ENCODE measurements at regions of chr12 and their contacts with region 1.

Region 1: DNA sequence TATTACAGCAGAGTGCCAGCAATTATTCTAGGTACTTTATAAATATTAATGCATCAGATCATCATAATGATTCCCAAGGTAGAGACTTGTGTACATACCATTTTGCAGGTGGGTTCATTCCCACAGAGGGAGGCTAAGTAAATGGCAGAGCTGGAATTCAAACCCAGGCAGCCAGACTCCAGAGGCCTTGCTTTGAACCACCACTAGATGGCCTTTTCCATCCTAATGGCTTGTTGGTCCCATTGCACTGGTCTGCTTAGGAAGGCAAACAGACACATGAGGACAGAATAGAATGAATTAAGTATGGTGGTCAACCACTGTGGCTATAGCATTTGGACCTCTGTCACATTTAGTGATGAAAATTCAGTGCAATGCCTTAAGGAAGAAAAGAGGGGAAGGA is 158.7 kb downstream of the METTL25 start:
- DNase-seq: no peak
- ATAC-seq: peak; percentile 96
- H3K4me3 ChIP-seq: no peak overlapping the region
- H3K27ac ChIP-seq: no peak overlapping the region
- H3K4me1 ChIP-seq: no peaks in the 10 kb centered on the region
- H3K27me3 ChIP-seq: no peaks in the 10 kb centered on the region
- CTCF ChIP-seq: peak; percentile 55 to 78 (median 59)
- EP300 ChIP-seq: no peak
- POLR2A ChIP-seq: no peak
- RAD21 ChIP-seq: peak; percentile 40

Region 2: DNA sequence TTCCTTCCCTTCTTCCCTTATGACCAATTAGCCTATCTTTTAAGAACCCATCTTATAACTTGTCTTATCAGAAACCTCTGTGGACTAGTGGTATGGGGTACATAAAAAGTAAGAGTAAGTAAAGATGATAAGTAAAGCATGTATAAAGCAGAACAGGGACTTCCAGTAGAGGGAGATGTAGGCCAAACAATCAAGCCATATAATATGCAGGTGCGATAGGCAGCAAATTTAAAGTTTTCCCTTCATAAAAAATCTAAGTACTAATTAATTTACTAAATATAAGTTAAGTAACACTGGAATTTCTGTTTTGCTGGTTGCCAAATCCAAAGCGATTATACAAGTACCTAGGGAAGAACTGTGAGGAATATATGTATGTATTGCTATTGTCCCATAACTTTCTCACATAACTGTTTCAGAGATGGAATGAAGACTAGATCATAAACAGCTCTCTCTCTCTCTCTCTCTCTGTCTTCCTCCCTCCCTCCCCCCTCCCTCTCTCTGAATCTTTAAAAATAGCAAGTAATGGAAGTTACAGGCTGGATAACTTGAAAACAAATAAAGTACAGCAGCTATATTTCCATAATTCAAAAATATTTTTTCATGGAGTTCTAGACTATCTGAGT is 133.0 kb before region 1 on chr12:
- CTCF ChIA-PET with region 1: interaction called, 9 read pairs
- POLR2A ChIA-PET with region 1: no interaction called
- RAD21 ChIA-PET with region 1: interaction called, 3 read pairs
- SMC1A ChIA-PET with region 1: interaction called, 6 read pairs
- in situ Hi-C with region 1: no loop called
- intact Hi-C with region 1: loop called (anchors 5 kb)
- DNase-seq: no peak
- ATAC-seq: peak; percentile 76
- H3K4me3 ChIP-seq: no peak overlapping the region
- H3K27ac ChIP-seq: no peak overlapping the region
- H3K4me1 ChIP-seq: no peaks in the 10 kb centered on the region
- H3K27me3 ChIP-seq: no peaks in the 10 kb centered on the region
- CTCF ChIP-seq: peak; percentile 28 to 54 (median 30); a peak in 4 of 6 replicates
- EP300 ChIP-seq: no peak
- POLR2A ChIP-seq: no peak
- RAD21 ChIP-seq: peak; percentile 64

Region 3: GRCh38 chr12:82527165-82527780 is 10.2 kb after region 1 on chr12:
- CTCF ChIA-PET with region 1: interaction called, 12 read pairs
- POLR2A ChIA-PET with region 1: no interaction called
- RAD21 ChIA-PET with region 1: interaction called, 3 read pairs
- SMC1A ChIA-PET with region 1: interaction called, 12 read pairs
- in situ Hi-C with region 1: no loop called
- intact Hi-C with region 1: no loop called
- DNase-seq: no peak
- ATAC-seq: peak; percentile 80
- H3K4me3 ChIP-seq: no peak overlapping the region
- H3K27ac ChIP-seq: no peak overlapping the region
- H3K4me1 ChIP-seq: no peaks in the 10 kb centered on the region
- H3K27me3 ChIP-seq: no peaks in the 10 kb centered on the region
- CTCF ChIP-seq: peak; percentile 83 to 92 (median 84)
- EP300 ChIP-seq: no peak
- POLR2A ChIP-seq: no peak
- RAD21 ChIP-seq: peak; percentile 97

Region 4: DNA sequence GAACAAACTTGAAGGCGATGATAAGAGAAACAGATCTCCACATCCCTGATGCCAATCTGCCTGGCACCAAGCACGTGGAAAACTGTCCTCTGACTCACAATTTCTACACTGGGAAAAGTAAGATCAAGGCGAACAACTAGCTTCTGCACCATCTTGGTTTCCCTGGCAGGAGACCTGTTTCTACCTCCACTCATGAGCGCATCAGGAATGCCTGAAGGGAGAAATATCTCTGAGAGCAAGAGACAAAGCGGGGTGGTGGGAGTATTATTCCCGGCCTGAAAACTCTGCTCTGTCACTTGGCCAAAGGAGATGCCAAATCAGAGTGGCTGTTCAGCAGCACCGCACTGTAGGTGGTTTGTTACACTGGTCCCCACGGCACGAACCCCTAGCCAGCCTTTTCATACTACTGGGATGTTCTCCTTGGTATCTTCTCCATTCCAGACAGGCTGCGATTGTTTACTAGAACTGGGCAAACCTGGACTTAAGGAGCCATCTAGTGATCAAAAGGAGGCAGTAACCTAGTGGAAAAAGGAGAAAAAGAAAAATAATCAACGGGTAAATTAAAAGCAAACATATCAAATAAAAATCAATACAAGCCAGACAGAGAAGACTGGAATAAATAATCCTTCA is 110.7 kb after region 1 on chr12:
- CTCF ChIA-PET with region 1: interaction called, 55 read pairs
- POLR2A ChIA-PET with region 1: no interaction called
- RAD21 ChIA-PET with region 1: no interaction called
- SMC1A ChIA-PET with region 1: interaction called, 11 read pairs
- in situ Hi-C with region 1: no loop called
- intact Hi-C with region 1: no loop called
- DNase-seq: no peak
- ATAC-seq: peak; percentile 81
- H3K4me3 ChIP-seq: no peak overlapping the region
- H3K27ac ChIP-seq: no peak overlapping the region
- H3K4me1 ChIP-seq: no peaks in the 10 kb centered on the region
- H3K27me3 ChIP-seq: no peaks in the 10 kb centered on the region
- CTCF ChIP-seq: peak; percentile 40 to 65 (median 43); a peak in 4 of 6 replicates
- EP300 ChIP-seq: no peak
- POLR2A ChIP-seq: no peak
- RAD21 ChIP-seq: peak; percentile 81

Region 5: GRCh38 chr12:84502907-84503787 is 1986.1 kb after region 1 on chr12:
- CTCF ChIA-PET with region 1: no interaction called
- POLR2A ChIA-PET with region 1: no interaction called
- RAD21 ChIA-PET with region 1: no interaction called
- SMC1A ChIA-PET with region 1: no interaction called
- in situ Hi-C with region 1: no loop called
- intact Hi-C with region 1: loop called (anchors 10 kb)
- DNase-seq: no peak
- ATAC-seq: peak; percentile 96
- H3K4me3 ChIP-seq: no peak overlapping the region
- H3K27ac ChIP-seq: no peak overlapping the region
- H3K4me1 ChIP-seq: no peaks in the 10 kb centered on the region
- H3K27me3 ChIP-seq: no peaks in the 10 kb centered on the region; a peak in 1 of 4 replicates
- CTCF ChIP-seq: peak; percentile 64 to 74 (median 68)
- EP300 ChIP-seq: no peak
- POLR2A ChIP-seq: no peak
- RAD21 ChIP-seq: peak; percentile 84

Measured in GM12878 (cell line).